A673 (cell line): ENCODE measurements at regions of chr20 and their contacts with region 1.

Region 1: GRCh38 chr20:9215539-9215938 is 146.7 kb downstream of the PLCB4 start:
- DNase-seq: peak; percentile 51
- H3K4me3 ChIP-seq: no peak overlapping the region
- H3K27ac ChIP-seq: no peak overlapping the region
- H3K4me1 ChIP-seq: peaks cover 8% of the 10 kb centered on the region
- H3K27me3 ChIP-seq: no peaks in the 10 kb centered on the region
- CTCF ChIP-seq: peak; percentile 70

Region 2: DNA sequence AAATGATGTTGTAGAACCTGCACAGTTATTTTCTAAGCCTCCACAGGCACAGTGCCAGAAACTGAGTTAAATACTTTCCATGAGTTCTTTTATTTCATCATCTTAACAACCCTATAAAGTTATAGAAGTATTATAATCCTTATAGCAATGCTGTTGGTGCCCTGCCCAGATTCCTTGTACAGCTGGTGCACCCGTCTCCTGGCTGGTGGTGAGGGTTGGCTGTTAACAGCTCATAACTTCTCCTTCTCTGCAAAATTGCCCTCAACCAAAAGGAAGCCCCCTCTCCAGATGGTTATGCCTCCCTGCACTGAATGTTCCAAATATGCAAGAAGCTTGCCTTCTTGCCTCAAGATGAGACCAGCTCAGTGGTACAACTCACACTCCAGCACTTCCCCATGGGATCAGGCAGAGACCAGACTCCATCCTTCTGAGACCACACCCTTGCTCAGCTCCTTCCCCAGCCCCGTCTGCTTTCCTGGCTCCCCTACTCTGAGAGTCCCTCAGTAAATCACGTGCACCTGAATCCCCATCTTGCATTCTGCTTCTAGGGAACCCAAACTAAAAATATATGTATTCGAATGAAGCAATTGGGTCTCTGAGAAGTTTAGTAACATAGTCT is 451.1 kb before region 1 on chr20:
- CTCF ChIA-PET with region 1: no interaction called
- POLR2A ChIA-PET with region 1: no interaction called
- intact Hi-C with region 1: loop called (anchors 10 kb)
- DNase-seq: peak; percentile 62
- H3K4me3 ChIP-seq: no peak overlapping the region
- H3K27ac ChIP-seq: no peak overlapping the region
- H3K4me1 ChIP-seq: peaks cover 12% of the 10 kb centered on the region
- H3K27me3 ChIP-seq: no peaks in the 10 kb centered on the region
- CTCF ChIP-seq: no peak

Region 3: GRCh38 chr20:9028419-9028818 is 187.1 kb before region 1 on chr20:
- CTCF ChIA-PET with region 1: no interaction called
- POLR2A ChIA-PET with region 1: no interaction called
- intact Hi-C with region 1: no loop called
- DNase-seq: no peak
- H3K4me3 ChIP-seq: no peak overlapping the region
- H3K27ac ChIP-seq: no peak overlapping the region
- H3K4me1 ChIP-seq: no peaks in the 10 kb centered on the region
- H3K27me3 ChIP-seq: no peaks in the 10 kb centered on the region
- CTCF ChIP-seq: no peak

Region 4: DNA sequence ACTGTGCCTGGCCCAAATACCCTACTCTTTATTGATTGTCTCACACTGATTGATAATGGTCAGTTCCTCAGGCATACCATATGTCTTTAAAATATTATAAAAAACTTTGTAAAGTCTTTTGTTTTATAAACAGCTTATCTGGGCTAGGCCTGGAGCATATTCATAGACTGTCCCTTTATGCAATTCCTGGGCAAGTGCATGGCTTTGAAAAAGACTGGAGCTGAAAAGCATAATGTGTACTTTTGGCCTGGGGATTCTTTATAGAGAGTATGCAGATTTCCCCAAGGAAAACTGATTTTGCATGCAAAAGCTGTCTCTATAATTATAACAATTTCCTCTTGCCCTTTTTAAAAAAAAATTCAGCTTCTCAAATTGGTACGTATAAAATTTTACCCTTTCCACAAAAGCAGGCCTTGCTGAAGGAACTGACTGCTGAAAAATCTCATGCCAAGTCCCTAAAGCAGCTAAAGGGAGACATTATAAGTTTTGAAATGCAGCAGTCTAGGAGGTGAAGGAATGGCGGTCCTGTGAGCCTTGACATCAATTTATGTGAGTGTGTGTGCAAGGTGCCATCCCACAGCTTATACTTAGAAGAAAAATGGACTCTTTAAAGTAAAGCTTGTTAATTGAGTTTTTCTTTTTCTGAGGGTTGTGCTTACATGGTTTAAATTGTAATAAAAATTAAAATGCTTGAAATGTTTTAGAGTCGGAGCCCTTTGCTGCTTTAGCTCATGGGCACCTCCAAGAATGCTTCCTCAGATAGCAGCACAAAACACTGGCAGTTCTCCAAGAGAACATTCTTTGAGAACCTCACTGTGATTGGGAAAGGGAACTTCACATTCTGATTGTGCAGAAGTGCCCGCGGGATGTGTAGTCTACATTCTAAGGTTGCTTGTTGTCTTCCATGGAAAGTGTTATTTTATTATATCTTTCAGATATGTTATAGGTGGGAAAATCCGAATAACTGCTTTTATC is 102.7 kb before region 1 on chr20:
- CTCF ChIA-PET with region 1: no interaction called
- POLR2A ChIA-PET with region 1: no interaction called
- intact Hi-C with region 1: no loop called
- DNase-seq: peak; percentile 61
- H3K4me3 ChIP-seq: no peak overlapping the region
- H3K27ac ChIP-seq: no peak overlapping the region
- H3K4me1 ChIP-seq: peaks cover 5% of the 10 kb centered on the region
- H3K27me3 ChIP-seq: no peaks in the 10 kb centered on the region
- CTCF ChIP-seq: no peak